ENCODE measurements at regions of chr9 and their contacts with region 1.

Region 1: DNA sequence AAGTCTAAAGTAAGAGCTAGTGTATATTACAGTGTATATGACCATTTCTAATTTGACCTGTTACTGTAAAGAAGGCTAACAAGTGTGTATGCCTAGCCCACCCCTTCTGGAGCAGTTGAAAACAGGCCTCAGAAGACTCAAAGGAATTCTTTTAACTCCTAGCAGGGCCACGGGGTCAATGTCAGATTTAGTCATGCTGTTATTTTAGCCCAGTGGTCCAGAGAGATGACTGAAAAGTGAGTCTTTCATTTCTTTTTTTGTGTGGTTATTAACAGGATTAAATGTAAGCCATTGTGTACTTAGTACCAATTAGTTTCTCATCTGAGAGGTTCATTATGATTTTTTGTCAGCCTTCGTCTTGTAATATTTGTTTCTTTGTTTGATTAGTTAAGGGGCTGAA is 24.4 kb downstream of the ZCCHC7 start:
- DNase-seq: no peak
- ATAC-seq: no peak
- H3K4me3 ChIP-seq: no peak overlapping the region
- H3K4me3 Mint-ChIP-seq: peak overlapping the region; percentile 30
- H3K27ac ChIP-seq: peak overlapping the region; percentile 7 to 65
- H3K27ac Mint-ChIP-seq: peak overlapping the region; percentile 43
- H3K4me1 ChIP-seq: peaks cover 20 to 69% of the 10 kb centered on the region in 2 donors
- H3K4me1 Mint-ChIP-seq: peaks cover 60% of the 10 kb centered on the region
- H3K27me3 ChIP-seq: no peaks in the 10 kb centered on the region
- H3K27me3 Mint-ChIP-seq: no peaks in the 10 kb centered on the region
- CTCF ChIP-seq: no peak

Region 2: GRCh38 chr9:37126214-37126788 is 18.5 kb before region 1 on chr9:
- CTCF ChIA-PET with region 1: interaction called, 3 read pairs
- POLR2A ChIA-PET with region 1: interaction called, 3 read pairs
- intact Hi-C with region 1: loop called (anchors 2 kb)
- DNase-seq: no peak
- ATAC-seq: no peak
- H3K4me3 ChIP-seq: no peak overlapping the region
- H3K4me3 Mint-ChIP-seq: no peak overlapping the region
- H3K27ac ChIP-seq: peak overlapping the region in 1 of 2 donors; percentile 44
- H3K27ac Mint-ChIP-seq: no peak overlapping the region
- H3K4me1 ChIP-seq: peaks cover 47 to 69% of the 10 kb centered on the region in 2 donors
- H3K4me1 Mint-ChIP-seq: peaks cover 32% of the 10 kb centered on the region
- H3K27me3 ChIP-seq: no peaks in the 10 kb centered on the region
- H3K27me3 Mint-ChIP-seq: no peaks in the 10 kb centered on the region
- CTCF ChIP-seq: no peak

Region 3: GRCh38 chr9:37197158-37198038 is 52.6 kb after region 1 on chr9:
- CTCF ChIA-PET with region 1: interaction called, 3 read pairs
- POLR2A ChIA-PET with region 1: no interaction called
- intact Hi-C with region 1: loop called (anchors 2 kb)
- DNase-seq: peak; percentile 83
- ATAC-seq: peak; percentile 79
- H3K4me3 ChIP-seq: peak overlapping the region in 3 of 5 experiments; percentile 13 to 35 (median 21)
- H3K4me3 Mint-ChIP-seq: peak overlapping the region; percentile 76
- H3K27ac ChIP-seq: peak overlapping the region; percentile 81 to 87
- H3K27ac Mint-ChIP-seq: peak overlapping the region; percentile 87
- H3K4me1 ChIP-seq: peaks cover 83 to 91% of the 10 kb centered on the region in 2 donors
- H3K4me1 Mint-ChIP-seq: peaks cover 82% of the 10 kb centered on the region
- H3K27me3 ChIP-seq: no peaks in the 10 kb centered on the region
- H3K27me3 Mint-ChIP-seq: no peaks in the 10 kb centered on the region
- CTCF ChIP-seq: no peak

Region 4: DNA sequence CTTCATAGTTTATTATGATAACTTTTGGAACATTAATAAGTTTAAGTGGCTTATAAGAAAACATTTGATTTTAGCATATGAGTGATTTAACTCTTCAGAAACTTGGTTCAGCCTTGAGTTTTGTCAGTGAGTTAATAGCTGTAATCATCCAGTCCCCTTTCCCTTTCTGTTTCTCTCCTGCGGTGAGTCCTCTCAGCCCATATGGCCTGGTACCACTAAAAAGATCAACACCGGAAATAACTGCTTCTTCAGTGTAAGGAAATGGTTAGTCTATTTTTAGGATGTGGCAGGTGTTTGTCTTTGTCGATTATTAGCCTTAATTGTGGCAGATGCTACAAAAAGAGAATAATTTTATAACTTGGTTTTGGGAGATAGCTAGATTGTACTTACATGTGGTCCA is 157.5 kb after region 1 on chr9:
- CTCF ChIA-PET with region 1: no interaction called
- POLR2A ChIA-PET with region 1: interaction called, 8 read pairs
- intact Hi-C with region 1: loop called (anchors 5 kb)
- DNase-seq: peak; percentile 88
- ATAC-seq: peak; percentile 90
- H3K4me3 ChIP-seq: peak overlapping the region in 3 of 5 experiments; percentile 5 to 42 (median 17)
- H3K4me3 Mint-ChIP-seq: peak overlapping the region; percentile 82
- H3K27ac ChIP-seq: peak overlapping the region; percentile 79 to 88
- H3K27ac Mint-ChIP-seq: peak overlapping the region; percentile 96
- H3K4me1 ChIP-seq: peaks cover 79 to 84% of the 10 kb centered on the region in 2 donors
- H3K4me1 Mint-ChIP-seq: peaks cover 81% of the 10 kb centered on the region
- H3K27me3 ChIP-seq: no peaks in the 10 kb centered on the region
- H3K27me3 Mint-ChIP-seq: no peaks in the 10 kb centered on the region
- CTCF ChIP-seq: no peak